ENCODE measurements at regions of chr11 and their contacts with region 1.

Region 1: DNA sequence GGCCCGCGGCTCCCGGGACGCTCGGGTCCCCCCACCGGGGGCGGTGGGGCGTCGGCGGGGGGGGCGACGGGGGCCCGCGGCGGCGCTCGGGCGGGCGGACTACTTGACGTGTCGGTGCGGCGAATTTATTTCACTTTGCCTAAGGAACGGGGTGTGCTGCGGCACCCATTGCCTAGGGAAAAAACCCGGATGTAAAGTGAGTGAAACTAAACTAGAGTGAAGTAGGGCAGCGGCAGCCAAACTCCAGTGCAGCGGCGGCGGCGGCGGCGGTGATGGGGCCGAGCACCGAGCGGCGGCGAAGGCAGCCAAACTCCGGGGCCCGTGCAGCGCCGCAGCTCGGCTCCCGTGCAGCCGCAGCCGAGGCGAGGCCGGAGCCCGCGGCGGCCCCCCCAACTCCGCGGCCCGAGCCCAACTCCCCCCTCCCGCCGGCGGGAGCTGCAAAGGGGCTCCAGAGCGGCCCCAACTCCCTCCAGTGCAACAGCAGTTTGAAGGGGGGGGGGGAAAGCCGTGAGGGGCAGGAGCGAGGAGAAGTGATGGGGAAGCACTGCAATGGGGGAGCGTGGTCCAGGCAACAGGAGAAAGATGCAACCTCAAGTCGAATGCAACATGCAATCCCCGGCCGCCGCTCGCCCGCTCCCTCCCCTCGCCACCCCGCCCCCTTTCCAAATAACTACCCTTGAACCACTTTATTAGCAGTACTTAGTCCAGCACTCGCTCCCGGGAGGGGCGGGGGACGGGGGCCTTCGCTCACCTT is 647 bp upstream of the PHF21A start:
- DNase-seq: peak; percentile 50 to 92 (median 73)
- ATAC-seq: peak; percentile 54
- H3K4me3 ChIP-seq: peak overlapping the region; percentile 58 to 63
- H3K4me3 Mint-ChIP-seq: peak overlapping the region; percentile 88
- H3K27ac ChIP-seq: peak overlapping the region; percentile 1 to 26
- H3K27ac Mint-ChIP-seq: peak overlapping the region; percentile 96
- H3K4me1 ChIP-seq: peaks cover 30% of the 10 kb centered on the region
- H3K4me1 Mint-ChIP-seq: peaks cover 33% of the 10 kb centered on the region
- H3K27me3 ChIP-seq: no peaks in the 10 kb centered on the region
- H3K27me3 Mint-ChIP-seq: no peaks in the 10 kb centered on the region
- CTCF ChIP-seq: no peak

Region 2: DNA sequence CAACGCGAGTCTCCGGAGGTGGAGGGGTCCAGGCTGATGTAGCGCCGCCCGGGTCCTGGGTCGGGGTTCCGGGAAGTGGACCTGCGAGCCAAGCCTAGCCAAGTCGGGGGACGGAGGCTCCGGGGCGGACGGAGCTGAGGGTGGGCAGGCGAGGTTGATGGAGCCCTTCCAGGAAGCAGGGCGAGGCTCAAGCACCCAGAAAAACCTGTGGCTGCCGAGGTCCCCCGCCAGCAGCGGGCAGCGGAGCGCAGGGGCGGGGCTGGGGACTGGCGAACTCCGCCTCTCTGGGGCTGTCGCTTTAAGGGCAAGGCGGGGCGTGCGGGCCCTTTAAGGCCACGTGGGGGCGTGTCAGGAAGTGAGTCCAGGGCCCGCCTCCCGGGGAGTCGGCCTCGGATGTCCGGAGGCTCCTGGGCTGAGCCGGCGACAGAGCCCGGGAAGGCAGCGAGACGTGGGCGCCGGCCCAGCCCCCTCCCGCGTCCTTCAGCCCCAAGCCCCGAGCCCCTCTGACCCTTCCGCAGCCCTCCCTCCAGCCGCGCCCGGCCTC is 317.1 kb before region 1 on chr11 and contains the start of gene SLC35C1:
- CTCF ChIA-PET with region 1: no interaction called
- POLR2A ChIA-PET with region 1: interaction called, 4 read pairs
- intact Hi-C with region 1: loop called in 1 of 2 experiments (anchors 10 kb)
- DNase-seq: peak; percentile 89 to 98 (median 97)
- ATAC-seq: peak; percentile 96
- H3K4me3 ChIP-seq: peak within 1 kb of the TSS; percentile 97
- H3K4me3 Mint-ChIP-seq: peak within 1 kb of the TSS; percentile 90
- H3K27ac ChIP-seq: peak within 1 kb of the TSS; percentile 76 to 81
- H3K27ac Mint-ChIP-seq: peak within 1 kb of the TSS; percentile 81
- H3K4me1 ChIP-seq: peaks cover 32% of the 10 kb centered on the region
- H3K4me1 Mint-ChIP-seq: peaks cover 44% of the 10 kb centered on the region
- H3K27me3 ChIP-seq: no peaks in the 10 kb centered on the region
- H3K27me3 Mint-ChIP-seq: no peaks in the 10 kb centered on the region
- CTCF ChIP-seq: no peak
- total RNA-seq, gene SLC35C1: 3.1 to 3.3 TPM

Region 3: GRCh38 chr11:46083972-46084371 is 37.9 kb before region 1 on chr11:
- CTCF ChIA-PET with region 1: no interaction called
- POLR2A ChIA-PET with region 1: no interaction called
- intact Hi-C with region 1: loop called in 1 of 2 experiments (anchors 5 kb)
- DNase-seq: no peak
- ATAC-seq: no peak
- H3K4me3 ChIP-seq: no peak overlapping the region
- H3K4me3 Mint-ChIP-seq: no peak overlapping the region
- H3K27ac ChIP-seq: no peak overlapping the region
- H3K27ac Mint-ChIP-seq: no peak overlapping the region
- H3K4me1 ChIP-seq: no peaks in the 10 kb centered on the region
- H3K4me1 Mint-ChIP-seq: peaks cover 3% of the 10 kb centered on the region
- H3K27me3 ChIP-seq: no peaks in the 10 kb centered on the region
- H3K27me3 Mint-ChIP-seq: no peaks in the 10 kb centered on the region
- CTCF ChIP-seq: no peak

Region 4: DNA sequence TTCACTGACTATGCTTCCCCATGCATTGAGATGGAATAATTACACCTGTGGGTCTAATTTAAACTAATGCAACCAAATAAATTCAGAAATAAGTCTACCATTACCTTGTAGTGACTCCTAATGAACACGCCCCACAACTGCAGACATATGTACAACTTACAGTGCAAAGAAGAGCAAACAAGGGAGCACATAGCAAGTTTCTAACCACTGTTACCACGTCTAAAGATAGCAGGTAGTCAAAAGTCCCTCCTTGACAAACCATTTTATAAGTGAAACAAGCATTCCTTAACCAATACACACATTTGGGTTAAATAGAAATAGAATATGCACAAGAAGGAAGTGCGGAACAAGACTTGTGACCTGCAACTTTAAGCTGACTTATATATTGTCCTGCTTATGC is 21.2 kb before region 1 on chr11:
- CTCF ChIA-PET with region 1: interaction called, 4 read pairs
- POLR2A ChIA-PET with region 1: no interaction called
- intact Hi-C with region 1: loop called (anchors 2 kb)
- DNase-seq: peak in 2 of 9 experiments; percentile 34 to 59
- ATAC-seq: peak; percentile 70
- H3K4me3 ChIP-seq: peak overlapping the region; percentile 20 to 38
- H3K4me3 Mint-ChIP-seq: peak overlapping the region; percentile 63
- H3K27ac ChIP-seq: peak overlapping the region in 1 of 2 experiments; percentile 71
- H3K27ac Mint-ChIP-seq: peak overlapping the region; percentile 85
- H3K4me1 ChIP-seq: peaks cover 25% of the 10 kb centered on the region
- H3K4me1 Mint-ChIP-seq: peaks cover 69% of the 10 kb centered on the region
- H3K27me3 ChIP-seq: no peaks in the 10 kb centered on the region
- H3K27me3 Mint-ChIP-seq: no peaks in the 10 kb centered on the region
- CTCF ChIP-seq: no peak

Region 5: DNA sequence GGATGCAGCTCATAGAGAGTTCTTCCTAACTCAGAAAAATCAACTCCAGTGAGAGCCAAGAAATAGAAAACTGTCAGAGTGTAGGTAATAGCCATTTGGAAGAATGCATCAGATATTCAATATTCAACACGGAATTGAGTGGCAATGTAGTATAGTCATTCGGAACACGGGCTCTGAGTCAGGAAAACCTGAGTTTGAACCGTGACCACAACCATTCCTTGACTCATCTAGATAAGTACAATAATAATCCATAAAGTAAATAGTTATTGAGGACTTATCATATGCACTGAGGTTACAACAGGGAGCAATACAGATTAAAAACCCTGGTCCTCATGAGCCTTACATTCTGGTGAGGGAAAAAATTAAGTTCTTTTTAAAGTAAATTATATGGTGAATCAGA is 61.9 kb after region 1 on chr11:
- CTCF ChIA-PET with region 1: no interaction called
- POLR2A ChIA-PET with region 1: no interaction called
- intact Hi-C with region 1: no loop called
- DNase-seq: no peak
- ATAC-seq: no peak
- H3K4me3 ChIP-seq: no peak overlapping the region
- H3K4me3 Mint-ChIP-seq: no peak overlapping the region
- H3K27ac ChIP-seq: no peak overlapping the region
- H3K27ac Mint-ChIP-seq: no peak overlapping the region
- H3K4me1 ChIP-seq: no peaks in the 10 kb centered on the region
- H3K4me1 Mint-ChIP-seq: no peaks in the 10 kb centered on the region
- H3K27me3 ChIP-seq: peaks cover 0 to 2% of the 10 kb centered on the region in 2 experiments
- H3K27me3 Mint-ChIP-seq: peaks cover 31% of the 10 kb centered on the region
- CTCF ChIP-seq: no peak